ENCODE measurements at regions of chr3 and their contacts with region 1.

Region 1: DNA sequence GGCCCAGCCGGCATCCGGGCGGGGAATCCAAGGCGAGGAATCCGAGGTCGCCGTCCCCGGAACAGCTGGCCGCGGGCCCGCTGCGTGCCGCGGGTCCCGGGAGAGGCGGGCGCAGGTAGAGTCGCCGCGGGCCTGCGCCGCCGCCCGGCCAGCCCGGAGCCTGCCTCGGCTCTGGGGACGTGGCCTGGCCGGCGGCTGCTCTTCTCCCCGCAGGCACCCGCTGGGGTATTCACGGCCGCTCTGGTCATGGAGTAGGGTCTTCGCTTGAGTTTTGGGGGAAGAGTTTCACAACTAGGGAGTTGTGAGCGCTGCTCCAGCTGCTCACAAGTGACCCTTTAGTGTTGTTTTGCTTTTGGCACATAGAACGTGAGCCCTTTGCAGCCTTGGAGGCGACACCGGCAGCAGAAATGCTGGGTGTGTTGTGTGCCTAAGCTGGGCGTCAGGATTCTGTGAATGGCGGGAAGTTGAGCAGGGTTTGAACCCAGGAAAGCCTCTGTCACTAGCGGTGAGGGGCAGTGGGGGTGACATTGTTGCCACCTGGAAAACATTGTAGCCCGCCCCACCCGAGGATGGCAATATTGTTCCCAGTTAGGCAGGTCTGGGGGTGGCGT is 4.0 kb downstream of the TRIM71 start:
- DNase-seq: no peak
- ATAC-seq: peak; percentile 2; the same call in 1 of the 3 replicates
- H3K4me3 ChIP-seq: peak overlapping the region; percentile 92 to 98 (median 94)
- H3K27ac ChIP-seq: peak overlapping the region; percentile 99
- H3K4me1 ChIP-seq: peaks cover 40% of the 10 kb centered on the region
- H3K27me3 ChIP-seq: peaks cover 0 to 6% of the 10 kb centered on the region in 2 experiments; a peak in 1 of 5 replicates
- CTCF ChIP-seq: no peak
- EP300 ChIP-seq: no peak
- POLR2A ChIP-seq: no peak
- RAD21 ChIP-seq: no peak

Region 2: DNA sequence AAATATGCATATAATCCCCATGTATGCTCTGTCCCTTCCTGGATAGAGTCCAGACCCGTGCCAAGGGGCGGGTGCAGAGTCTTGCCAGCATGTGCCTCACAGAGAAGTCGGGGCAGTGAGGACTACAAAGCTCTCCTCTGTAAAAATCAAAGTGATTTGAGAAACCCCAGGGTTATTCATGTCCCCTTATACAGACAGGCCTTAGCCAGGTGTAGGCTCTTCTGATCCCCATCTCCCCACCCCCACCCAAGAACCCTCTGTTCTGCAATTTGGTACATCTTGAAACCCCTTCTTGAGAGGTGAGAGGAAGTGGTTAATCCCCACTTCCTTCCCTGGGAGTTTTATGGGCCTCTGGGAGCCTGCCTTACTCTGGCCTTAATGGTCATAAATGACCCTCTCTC is 20.7 kb after region 1 on chr3:
- CTCF ChIA-PET with region 1: no interaction called
- POLR2A ChIA-PET with region 1: interaction called, 36 read pairs
- in situ Hi-C with region 1: no loop called
- intact Hi-C with region 1: loop called (anchors 2 kb)
- DNase-seq: no peak
- ATAC-seq: no peak
- H3K4me3 ChIP-seq: peak overlapping the region in 1 of 3 experiments; percentile 29; a peak in 1 of 6 replicates
- H3K27ac ChIP-seq: peak overlapping the region; percentile 100
- H3K4me1 ChIP-seq: peaks cover 99% of the 10 kb centered on the region
- H3K27me3 ChIP-seq: no peaks in the 10 kb centered on the region
- CTCF ChIP-seq: no peak
- EP300 ChIP-seq: no peak
- POLR2A ChIP-seq: no peak
- RAD21 ChIP-seq: no peak

Region 3: GRCh38 chr3:32865405-32865804 is 43.6 kb after region 1 on chr3:
- CTCF ChIA-PET with region 1: no interaction called
- POLR2A ChIA-PET with region 1: no interaction called
- in situ Hi-C with region 1: loop called (anchors 5 kb)
- intact Hi-C with region 1: loop called (anchors 2 kb)
- DNase-seq: peak; percentile 32
- ATAC-seq: peak; percentile 48
- H3K4me3 ChIP-seq: no peak overlapping the region
- H3K27ac ChIP-seq: peak overlapping the region; percentile 53
- H3K4me1 ChIP-seq: peaks cover 100% of the 10 kb centered on the region
- H3K27me3 ChIP-seq: no peaks in the 10 kb centered on the region
- CTCF ChIP-seq: no peak
- EP300 ChIP-seq: no peak
- POLR2A ChIP-seq: no peak
- RAD21 ChIP-seq: no peak

Region 4: GRCh38 chr3:32882603-32883025 is 60.8 kb after region 1 on chr3:
- CTCF ChIA-PET with region 1: no interaction called
- POLR2A ChIA-PET with region 1: no interaction called
- in situ Hi-C with region 1: loop called (anchors 10 kb)
- intact Hi-C with region 1: no loop called
- DNase-seq: no peak
- ATAC-seq: no peak
- H3K4me3 ChIP-seq: no peak overlapping the region
- H3K27ac ChIP-seq: no peak overlapping the region
- H3K4me1 ChIP-seq: peaks cover 66% of the 10 kb centered on the region
- H3K27me3 ChIP-seq: no peaks in the 10 kb centered on the region
- CTCF ChIP-seq: no peak
- EP300 ChIP-seq: no peak
- POLR2A ChIP-seq: no peak
- RAD21 ChIP-seq: no peak

Region 5: DNA sequence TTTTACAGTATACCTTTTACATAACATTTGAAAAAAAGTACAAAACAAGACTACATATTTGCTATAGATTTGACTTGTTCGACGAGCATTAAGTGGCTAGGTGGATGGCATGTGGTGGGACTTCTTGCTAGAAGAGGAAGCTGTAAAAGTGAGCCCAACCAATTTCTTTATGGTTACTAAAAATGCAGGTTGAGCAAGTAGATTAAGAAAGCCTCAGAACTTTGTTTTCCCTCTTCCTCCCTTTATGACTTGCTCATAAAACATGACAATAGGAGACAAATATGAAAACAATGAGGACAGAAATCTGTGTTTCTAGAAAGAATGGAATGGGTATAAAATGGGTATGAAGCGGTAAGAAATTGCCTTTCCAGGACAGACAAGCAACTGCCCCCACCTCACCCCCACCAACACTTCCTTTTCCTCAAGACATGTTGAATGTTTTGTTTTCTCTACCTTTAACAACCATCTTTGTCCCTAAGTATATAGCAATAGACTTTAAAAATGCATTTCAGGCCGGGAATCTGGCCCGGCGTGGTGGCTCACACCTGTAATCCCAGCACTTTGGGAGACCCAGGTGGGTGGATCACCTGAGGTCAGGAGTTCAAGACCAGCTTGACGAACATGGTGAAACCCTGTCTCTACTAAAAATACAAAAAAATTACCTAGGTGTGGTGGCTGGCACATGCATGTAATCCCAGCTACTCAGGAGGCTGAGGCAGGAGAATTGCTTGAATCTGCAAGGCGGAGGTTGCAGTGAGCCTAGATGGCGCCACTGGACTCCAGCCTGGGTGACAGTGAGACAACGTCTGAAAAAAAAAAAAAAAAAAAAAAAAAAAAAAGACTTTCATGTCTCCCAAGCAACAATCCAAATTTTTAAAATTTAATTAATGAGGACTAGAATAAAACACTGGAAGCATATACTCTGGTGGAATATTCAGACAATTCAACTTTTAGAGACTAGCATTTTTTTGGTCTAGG is 79.9 kb after region 1 on chr3:
- CTCF ChIA-PET with region 1: no interaction called
- POLR2A ChIA-PET with region 1: interaction called, 8 read pairs
- in situ Hi-C with region 1: no loop called
- intact Hi-C with region 1: loop called (anchors 1 kb)
- DNase-seq: peak; percentile 51
- ATAC-seq: peak; percentile 41
- H3K4me3 ChIP-seq: peak overlapping the region; percentile 40 to 57 (median 50); a peak in 5 of 6 replicates
- H3K27ac ChIP-seq: peak overlapping the region; percentile 16
- H3K4me1 ChIP-seq: peaks cover 17% of the 10 kb centered on the region
- H3K27me3 ChIP-seq: no peaks in the 10 kb centered on the region
- CTCF ChIP-seq: peak; percentile 55
- EP300 ChIP-seq: no peak
- POLR2A ChIP-seq: no peak
- RAD21 ChIP-seq: no peak